ENCODE measurements at regions of chr9 and their contacts with region 1.

Region 1: GRCh38 chr9:86093788-86094555 is 5.4 kb downstream of the GOLM1 start:
- DNase-seq: peak; percentile 86 to 94
- H3K4me3 ChIP-seq: no peak overlapping the region
- H3K4me3 Mint-ChIP-seq: peak overlapping the region; percentile 49
- H3K27ac Mint-ChIP-seq: peak overlapping the region; percentile 16
- H3K4me1 ChIP-seq: peaks cover 10% of the 10 kb centered on the region; the same call in 1 of the 2 replicates
- H3K4me1 Mint-ChIP-seq: peaks cover 7% of the 10 kb centered on the region
- H3K27me3 ChIP-seq: no peaks in the 10 kb centered on the region
- H3K27me3 Mint-ChIP-seq: no peaks in the 10 kb centered on the region
- CTCF ChIP-seq: no peak

Region 2: GRCh38 chr9:85443190-85443598 is 650.8 kb before region 1 on chr9:
- CTCF ChIA-PET with region 1: no interaction called
- POLR2A ChIA-PET with region 1: no interaction called
- intact Hi-C with region 1: no loop called
- DNase-seq: no peak
- H3K4me3 ChIP-seq: no peak overlapping the region
- H3K4me3 Mint-ChIP-seq: no peak overlapping the region
- H3K27ac Mint-ChIP-seq: no peak overlapping the region
- H3K4me1 ChIP-seq: no peaks in the 10 kb centered on the region
- H3K4me1 Mint-ChIP-seq: no peaks in the 10 kb centered on the region
- H3K27me3 ChIP-seq: no peaks in the 10 kb centered on the region
- H3K27me3 Mint-ChIP-seq: peaks cover 8% of the 10 kb centered on the region
- CTCF ChIP-seq: no peak

Region 3: GRCh38 chr9:85940832-85941621 is 152.9 kb before region 1 on chr9 and contains the start of gene NAA35:
- CTCF ChIA-PET with region 1: no interaction called
- POLR2A ChIA-PET with region 1: no interaction called
- intact Hi-C with region 1: loop called (anchors 1 kb)
- DNase-seq: peak; percentile 96
- H3K4me3 ChIP-seq: peak within 1 kb of the TSS; percentile 74
- H3K4me3 Mint-ChIP-seq: peak within 1 kb of the TSS; percentile 90
- H3K27ac Mint-ChIP-seq: peak within 1 kb of the TSS; percentile 94
- H3K4me1 ChIP-seq: peaks cover 13% of the 10 kb centered on the region
- H3K4me1 Mint-ChIP-seq: no peaks in the 10 kb centered on the region
- H3K27me3 ChIP-seq: no peaks in the 10 kb centered on the region
- H3K27me3 Mint-ChIP-seq: no peaks in the 10 kb centered on the region
- CTCF ChIP-seq: no peak
- total RNA-seq, gene NAA35: 22.4 and 24.1 TPM in 2 replicates

Region 4: GRCh38 chr9:86116425-86116824 is 22.5 kb after region 1 on chr9:
- CTCF ChIA-PET with region 1: no interaction called
- POLR2A ChIA-PET with region 1: no interaction called
- intact Hi-C with region 1: no loop called
- DNase-seq: no peak
- H3K4me3 ChIP-seq: no peak overlapping the region
- H3K4me3 Mint-ChIP-seq: no peak overlapping the region
- H3K27ac Mint-ChIP-seq: no peak overlapping the region
- H3K4me1 ChIP-seq: no peaks in the 10 kb centered on the region
- H3K4me1 Mint-ChIP-seq: no peaks in the 10 kb centered on the region
- H3K27me3 ChIP-seq: no peaks in the 10 kb centered on the region
- H3K27me3 Mint-ChIP-seq: no peaks in the 10 kb centered on the region
- CTCF ChIP-seq: no peak

Region 5: DNA sequence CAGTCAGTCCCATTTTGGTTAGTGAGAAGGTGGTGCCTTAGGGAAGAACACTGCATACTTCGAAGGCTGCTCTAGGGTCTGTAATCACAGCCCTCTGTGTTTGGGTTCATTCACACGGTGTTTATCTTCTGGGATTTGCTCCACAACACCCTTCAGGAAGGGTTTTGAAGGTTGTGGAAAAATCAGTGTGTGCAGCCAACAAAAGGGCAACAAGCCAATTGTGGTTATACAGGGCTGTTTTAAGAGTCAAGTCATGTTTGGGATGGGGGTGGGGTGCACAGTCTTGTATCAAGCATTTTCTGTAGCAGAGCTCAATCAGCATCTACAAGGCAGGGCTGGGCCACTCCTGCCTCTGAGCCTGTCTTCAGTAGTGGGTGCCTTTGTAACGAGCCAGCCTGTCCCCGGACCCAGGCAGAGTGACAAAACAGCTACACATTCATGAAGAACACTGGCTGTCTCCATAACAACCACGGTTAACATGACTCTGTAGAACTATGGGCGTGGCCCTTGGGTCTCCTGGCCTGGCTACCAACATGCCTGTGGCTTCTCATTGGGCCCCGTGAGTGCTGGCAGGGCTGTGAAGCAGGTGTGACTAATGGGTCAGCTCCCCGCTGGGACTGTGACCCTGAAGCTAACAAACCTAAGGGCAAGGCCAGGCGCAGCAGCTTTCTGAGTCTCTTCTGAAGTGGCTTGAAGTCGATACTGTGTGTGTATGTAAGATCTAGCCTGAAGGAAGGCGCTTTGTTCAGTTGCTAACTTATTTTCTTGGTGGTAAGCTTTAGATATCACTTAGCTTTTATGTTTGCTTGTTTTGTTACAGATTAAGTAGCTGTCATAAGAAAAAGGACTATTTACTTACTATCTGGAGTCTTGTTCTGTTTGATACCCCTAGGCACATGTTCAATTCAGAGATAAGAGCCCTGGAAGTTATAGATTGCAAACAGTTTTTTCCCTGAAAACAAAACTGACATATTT is 33.3 kb after region 1 on chr9:
- CTCF ChIA-PET with region 1: interaction called, 3 read pairs
- POLR2A ChIA-PET with region 1: no interaction called
- intact Hi-C with region 1: loop called (anchors 5 kb)
- DNase-seq: peak; percentile 81 to 91
- H3K4me3 ChIP-seq: no peak overlapping the region
- H3K4me3 Mint-ChIP-seq: peak overlapping the region; percentile 37
- H3K27ac Mint-ChIP-seq: peak overlapping the region; percentile 62
- H3K4me1 ChIP-seq: peaks cover 13% of the 10 kb centered on the region
- H3K4me1 Mint-ChIP-seq: no peaks in the 10 kb centered on the region
- H3K27me3 ChIP-seq: no peaks in the 10 kb centered on the region
- H3K27me3 Mint-ChIP-seq: no peaks in the 10 kb centered on the region
- CTCF ChIP-seq: no peak

Measured in Caco-2 (cell line).